ENCODE measurements at regions of chr19 and their contacts with region 1.

Region 1: GRCh38 chr19:34974646-34975045 is 10.6 kb upstream of the ZNF792 start:
- DNase-seq: no peak

Region 2: DNA sequence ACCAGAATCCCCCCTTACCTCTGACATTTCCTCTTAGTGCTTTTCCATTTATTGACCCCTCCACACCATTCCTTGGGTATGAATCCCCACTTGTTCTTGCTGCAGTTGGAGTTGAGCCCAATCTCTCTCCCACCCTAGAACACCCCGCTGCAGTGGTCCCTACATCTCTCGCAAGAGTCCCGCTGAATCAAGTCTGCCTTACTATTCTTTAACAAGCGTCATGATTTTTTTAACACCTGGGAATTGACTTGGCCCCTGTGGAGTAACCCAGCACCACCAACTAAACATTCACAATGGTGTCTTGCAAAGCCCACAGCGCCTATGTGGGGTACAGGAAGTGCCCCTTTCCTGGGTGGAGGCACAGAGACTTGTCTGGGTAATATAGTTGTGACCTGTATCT is 188.4 kb before region 1 on chr19:
- intact Hi-C with region 1: no loop called
- DNase-seq: no peak

Region 3: GRCh38 chr19:34867631-34868030 is 107.0 kb before region 1 on chr19:
- intact Hi-C with region 1: no loop called
- DNase-seq: no peak

Region 4: DNA sequence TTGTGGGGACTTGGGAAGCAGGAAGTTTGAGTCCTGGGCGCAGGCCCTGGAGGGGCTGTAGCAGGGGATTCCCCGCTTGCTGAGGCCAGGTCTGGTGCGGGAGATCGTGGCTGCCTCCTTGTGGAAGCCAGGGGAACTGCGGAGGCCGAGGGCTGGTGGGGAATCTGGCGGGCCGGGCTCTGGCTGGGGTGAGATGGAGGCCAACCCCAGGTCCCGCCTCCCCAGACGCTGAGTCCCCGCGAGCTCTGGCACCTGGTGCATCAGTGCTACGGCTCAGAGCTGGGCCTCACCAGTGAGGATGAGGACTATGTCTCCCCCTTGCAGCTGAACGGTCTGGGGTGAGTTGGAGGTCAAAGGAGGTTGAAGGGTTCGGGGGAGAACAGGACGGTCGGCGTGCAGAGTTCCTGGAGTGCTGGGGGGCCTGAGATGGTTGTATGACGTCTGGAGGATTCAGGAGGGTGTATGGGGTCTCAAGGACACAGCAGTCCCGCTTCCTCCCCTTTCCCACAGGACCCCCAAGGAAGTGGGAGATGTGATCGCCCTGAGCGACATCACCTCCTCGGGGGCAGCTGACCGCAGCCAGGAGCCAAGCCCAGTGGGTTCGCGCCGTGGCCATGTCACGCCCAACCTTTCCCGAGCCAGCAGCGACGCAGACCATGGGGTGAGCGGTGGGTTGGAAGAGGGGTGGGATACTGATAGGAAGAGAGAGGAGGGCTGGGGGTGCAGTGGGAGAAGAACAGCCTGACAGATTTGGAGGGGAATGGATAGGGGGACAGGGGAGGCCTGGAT is 38.6 kb after region 1 on chr19:
- intact Hi-C with region 1: loop called (anchors 1 kb)
- DNase-seq: peak in 8 of 10 donors; percentile 46 to 94 (median 68)

Region 5: GRCh38 chr19:35090506-35091237 is 116.0 kb after region 1 on chr19:
- intact Hi-C with region 1: loop called (anchors 2 kb)
- DNase-seq: peak in 6 of 10 donors; percentile 42 to 88 (median 58)

Region 6: GRCh38 chr19:35140962-35141637 is 166.5 kb after region 1 on chr19:
- intact Hi-C with region 1: loop called (anchors 2 kb)
- DNase-seq: peak; percentile 89 to 99 (median 96)